AG04449 (cell line): ENCODE measurements at regions of chr15 and their contacts with region 1.

Region 1: DNA sequence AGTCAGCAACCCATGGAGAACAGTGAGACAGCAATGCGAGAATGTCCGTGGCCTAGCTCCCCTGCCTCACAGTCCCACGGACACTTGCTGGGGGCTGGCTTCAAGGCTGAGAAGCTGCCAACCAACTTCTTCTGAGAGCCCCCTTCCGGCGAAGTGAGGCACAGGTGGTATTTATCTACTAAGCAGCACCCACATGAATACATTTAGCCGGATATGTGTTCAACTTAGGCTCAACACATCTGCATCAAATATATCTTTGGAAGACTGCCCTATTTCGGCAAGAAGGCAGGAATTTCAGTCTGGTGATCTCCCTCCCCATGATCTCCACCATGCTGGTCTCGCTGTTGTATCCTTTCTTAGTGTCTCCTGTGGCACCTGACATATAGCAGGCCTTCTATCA is 340.9 kb upstream of the NR2E3 start:
- DNase-seq: no peak
- H3K4me3 ChIP-seq: no peak overlapping the region
- CTCF ChIP-seq: peak; percentile 22

Region 2: GRCh38 chr15:71485099-71485693 is 15.8 kb after region 1 on chr15:
- CTCF ChIA-PET with region 1: interaction called, 14 read pairs
- POLR2A ChIA-PET with region 1: no interaction called
- DNase-seq: no peak
- H3K4me3 ChIP-seq: no peak overlapping the region
- CTCF ChIP-seq: peak; percentile 19

Region 3: GRCh38 chr15:71716990-71717389 is 247.6 kb after region 1 on chr15:
- CTCF ChIA-PET with region 1: no interaction called
- POLR2A ChIA-PET with region 1: no interaction called
- DNase-seq: no peak
- H3K4me3 ChIP-seq: no peak overlapping the region
- CTCF ChIP-seq: no peak